ENCODE measurements at regions of chr1 and their contacts with region 1.

Region 1: DNA sequence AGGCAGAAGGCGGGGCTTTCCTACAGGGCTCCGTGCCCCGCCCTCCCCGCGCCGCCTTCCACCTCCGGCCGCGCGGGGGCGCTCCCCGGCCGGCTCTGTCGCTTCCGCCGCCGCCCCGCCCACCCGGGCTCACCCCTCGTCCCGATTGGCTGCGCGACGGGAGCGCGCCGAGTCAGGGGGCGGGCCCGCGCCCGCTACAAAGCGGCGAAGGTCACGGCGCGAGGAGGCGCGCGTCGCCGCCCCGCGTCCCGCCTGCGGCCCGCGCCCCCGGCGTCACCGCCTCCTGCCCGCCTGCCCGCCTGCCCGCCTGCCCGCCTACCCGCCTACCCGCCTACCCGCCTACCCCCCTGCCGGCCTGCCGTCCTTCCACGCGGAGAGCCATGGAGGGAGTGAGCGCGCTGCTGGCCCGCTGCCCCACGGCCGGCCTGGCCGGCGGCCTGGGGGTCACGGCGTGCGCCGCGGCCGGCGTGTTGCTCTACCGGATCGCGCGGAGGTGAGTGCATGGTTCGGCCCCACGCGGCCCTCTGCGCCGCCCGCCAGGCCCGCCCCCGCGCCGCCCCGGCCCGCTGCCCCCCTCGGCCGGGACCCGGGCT is at the start of gene TMEM201:
- DNase-seq: peak; percentile 88 to 95 (median 94)
- H3K4me3 ChIP-seq: peak within 1 kb of the TSS in 1 of 2 donors; percentile 57
- H3K4me3 Mint-ChIP-seq: peak within 1 kb of the TSS; percentile 84 to 91 (median 86)
- H3K27ac ChIP-seq: peak within 1 kb of the TSS; percentile 47
- H3K27ac Mint-ChIP-seq: peak within 1 kb of the TSS; percentile 73 to 87 (median 82)
- H3K4me1 ChIP-seq: peaks cover 39% of the 10 kb centered on the region
- H3K4me1 Mint-ChIP-seq: peaks cover 14 to 47% (median 25%) of the 10 kb centered on the region in 4 donors
- H3K27me3 ChIP-seq: no peaks in the 10 kb centered on the region
- H3K27me3 Mint-ChIP-seq: no peaks in the 10 kb centered on the region
- total RNA-seq, gene TMEM201: 11.2 to 12.9 TPM

Region 2: DNA sequence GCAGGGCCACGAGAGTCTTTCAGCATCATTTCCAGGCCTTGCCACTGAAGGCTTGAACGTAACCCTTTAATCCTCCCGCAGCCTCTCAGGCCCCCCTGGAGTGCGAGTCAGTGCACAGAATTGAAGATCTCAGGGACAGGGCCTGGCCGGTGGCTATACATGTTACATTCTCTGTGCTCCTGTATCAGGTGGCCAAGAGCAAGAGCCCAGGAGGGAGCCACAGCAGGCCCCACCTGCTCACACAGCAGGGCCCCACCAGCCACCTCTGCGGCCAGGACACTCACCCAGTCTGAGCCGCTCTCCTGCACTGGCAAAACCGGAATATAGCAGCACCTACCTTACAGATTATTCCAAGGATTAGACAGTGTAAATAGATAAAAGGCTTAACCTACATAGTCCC is 83.5 kb before region 1 on chr1:
- CTCF ChIA-PET with region 1: no interaction called
- POLR2A ChIA-PET with region 1: no interaction called
- intact Hi-C with region 1: no loop called
- DNase-seq: no peak
- H3K4me3 ChIP-seq: no peak overlapping the region
- H3K4me3 Mint-ChIP-seq: no peak overlapping the region
- H3K27ac ChIP-seq: no peak overlapping the region
- H3K27ac Mint-ChIP-seq: no peak overlapping the region
- H3K4me1 ChIP-seq: no peaks in the 10 kb centered on the region
- H3K4me1 Mint-ChIP-seq: no peaks in the 10 kb centered on the region
- H3K27me3 ChIP-seq: no peaks in the 10 kb centered on the region
- H3K27me3 Mint-ChIP-seq: peaks cover 3 to 6% of the 10 kb centered on the region in 2 donors

Region 3: GRCh38 chr1:9539165-9539828 is 49.4 kb before region 1 on chr1 and contains the start of gene SLC25A33:
- CTCF ChIA-PET with region 1: interaction called, 4 read pairs
- POLR2A ChIA-PET with region 1: no interaction called
- intact Hi-C with region 1: loop called (anchors 1 kb)
- DNase-seq: peak; percentile 91 to 97 (median 94)
- H3K4me3 ChIP-seq: peak within 1 kb of the TSS; percentile 19 to 66
- H3K4me3 Mint-ChIP-seq: peak within 1 kb of the TSS; percentile 86 to 91 (median 89)
- H3K27ac ChIP-seq: peak within 1 kb of the TSS; percentile 59
- H3K27ac Mint-ChIP-seq: peak within 1 kb of the TSS; percentile 88 to 95 (median 91)
- H3K4me1 ChIP-seq: peaks cover 19% of the 10 kb centered on the region
- H3K4me1 Mint-ChIP-seq: peaks cover 17 to 39% (median 26%) of the 10 kb centered on the region in 4 donors
- H3K27me3 ChIP-seq: no peaks in the 10 kb centered on the region
- H3K27me3 Mint-ChIP-seq: no peaks in the 10 kb centered on the region
- total RNA-seq, gene SLC25A33: 2.5 to 3.1 TPM

Region 4: DNA sequence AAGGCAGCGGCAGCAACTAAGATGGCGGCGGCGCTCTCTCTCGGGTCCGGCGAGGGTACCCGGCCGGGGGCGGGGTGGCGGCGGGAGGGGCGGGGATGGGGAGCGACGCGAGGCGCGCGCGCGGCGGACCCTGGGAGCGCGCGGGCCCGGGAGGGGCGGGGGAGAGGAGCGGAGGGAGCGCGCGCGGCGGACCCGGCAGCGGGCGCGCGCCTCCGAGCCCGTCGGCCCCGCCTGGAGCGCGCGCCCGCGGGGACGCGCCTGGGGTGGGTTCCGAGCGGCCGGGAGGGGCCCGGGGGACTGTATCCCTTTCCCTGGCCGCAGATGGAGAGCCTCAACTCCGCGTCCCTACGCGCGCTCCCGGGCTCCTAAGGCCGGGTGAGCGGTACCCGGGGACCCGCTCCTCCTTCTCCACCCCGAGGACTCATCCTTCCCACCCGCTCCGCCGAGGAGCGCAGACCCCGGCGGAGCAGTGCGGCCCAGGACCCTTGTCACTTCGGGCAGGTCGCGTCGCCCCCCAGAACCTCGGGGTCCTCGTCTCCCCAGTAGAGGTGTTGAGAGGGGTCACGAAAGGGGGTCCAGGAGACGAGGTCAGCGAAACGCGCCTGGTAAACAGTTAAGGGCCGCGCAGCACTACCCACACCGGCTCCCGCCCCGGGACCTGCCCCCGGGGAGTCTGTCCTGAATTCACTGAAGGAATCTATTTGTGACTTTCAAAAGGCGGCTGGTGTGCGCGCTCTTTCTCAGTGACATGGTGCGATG is 235.5 kb after region 1 on chr1 and contains the start of gene CLSTN1:
- CTCF ChIA-PET with region 1: no interaction called
- POLR2A ChIA-PET with region 1: no interaction called
- intact Hi-C with region 1: loop called (anchors 1 kb)
- DNase-seq: peak; percentile 85 to 92 (median 86)
- H3K4me3 ChIP-seq: peak within 1 kb of the TSS; percentile 73 to 76
- H3K4me3 Mint-ChIP-seq: peak within 1 kb of the TSS; percentile 94 to 99 (median 97)
- H3K27ac ChIP-seq: peak within 1 kb of the TSS; percentile 55
- H3K27ac Mint-ChIP-seq: peak within 1 kb of the TSS; percentile 90 to 97 (median 96)
- H3K4me1 ChIP-seq: peaks cover 55% of the 10 kb centered on the region
- H3K4me1 Mint-ChIP-seq: peaks cover 25 to 68% (median 41%) of the 10 kb centered on the region in 4 donors
- H3K27me3 ChIP-seq: no peaks in the 10 kb centered on the region
- H3K27me3 Mint-ChIP-seq: no peaks in the 10 kb centered on the region
- total RNA-seq, gene CLSTN1: 107 to 109 TPM